ENCODE measurements at regions of chr6 and their contacts with region 1.

Region 1: DNA sequence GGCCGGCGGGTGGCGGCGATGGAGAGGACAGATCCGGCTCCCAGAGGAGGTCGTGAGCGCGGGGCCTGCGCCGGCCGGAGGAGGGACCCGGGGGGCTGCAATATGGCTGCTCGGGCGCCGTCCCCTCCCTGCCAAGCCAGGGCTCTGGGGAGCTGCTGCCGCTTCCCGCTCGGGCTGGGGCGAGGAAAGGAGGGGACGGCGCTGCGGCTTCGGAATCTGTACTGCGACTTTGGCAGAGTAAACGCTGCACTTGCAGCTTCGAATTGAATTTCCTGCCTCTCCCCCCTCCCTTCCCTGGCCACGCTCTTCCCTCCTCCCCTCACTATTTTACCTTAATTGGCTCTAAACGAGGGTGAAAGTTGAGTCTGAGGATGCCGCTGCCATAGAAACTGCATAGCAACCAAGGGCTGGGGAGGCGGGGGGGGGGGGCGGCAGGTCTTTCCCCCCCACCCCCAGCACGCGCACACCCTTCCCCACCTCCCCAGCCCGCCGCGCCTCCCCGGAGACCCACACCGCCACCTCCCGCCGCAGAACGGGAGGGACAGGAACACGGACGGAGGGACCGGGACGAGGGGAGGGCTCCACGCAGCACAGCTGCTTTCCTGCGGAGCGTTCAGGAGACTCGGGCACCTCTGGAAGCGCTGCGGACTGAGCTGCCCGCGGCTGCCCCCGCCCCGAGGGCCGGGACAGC is 93.9 kb downstream of the RNASET2 start:
- DNase-seq: peak; percentile 51
- H3K4me3 Mint-ChIP-seq: peak overlapping the region; percentile 79
- H3K27ac Mint-ChIP-seq: no peak overlapping the region
- H3K4me1 Mint-ChIP-seq: peaks cover 7% of the 10 kb centered on the region
- H3K27me3 Mint-ChIP-seq: no peaks in the 10 kb centered on the region

Region 2: DNA sequence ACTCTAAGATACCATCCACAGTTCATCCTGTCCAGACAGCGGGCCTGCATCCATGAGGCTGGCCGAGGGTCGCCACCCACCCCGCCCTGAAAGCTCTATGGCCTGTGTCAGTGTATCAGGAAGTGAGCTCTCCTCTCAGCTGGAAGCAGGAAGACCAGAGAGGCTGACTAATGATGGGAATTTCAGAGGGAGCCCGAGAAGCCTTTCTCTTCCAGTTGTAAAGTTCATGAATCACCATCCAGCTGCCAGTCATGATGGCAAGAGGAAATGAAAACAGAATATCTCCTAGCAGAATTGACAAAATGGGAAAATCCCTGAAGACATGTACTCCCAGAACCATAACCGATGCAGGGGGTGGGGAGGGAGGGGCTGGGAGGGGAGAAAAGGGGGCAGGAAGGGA is 125.8 kb before region 1 on chr6:
- CTCF ChIA-PET with region 1: no interaction called
- intact Hi-C with region 1: no loop called
- DNase-seq: no peak
- H3K4me3 Mint-ChIP-seq: no peak overlapping the region
- H3K27ac Mint-ChIP-seq: no peak overlapping the region
- H3K4me1 Mint-ChIP-seq: no peaks in the 10 kb centered on the region
- H3K27me3 Mint-ChIP-seq: no peaks in the 10 kb centered on the region

Region 3: GRCh38 chr6:166786704-166787293 is 75.6 kb before region 1 on chr6:
- CTCF ChIA-PET with region 1: no interaction called
- intact Hi-C with region 1: loop called (anchors 2 kb)
- DNase-seq: peak; percentile 24
- H3K4me3 Mint-ChIP-seq: no peak overlapping the region
- H3K27ac Mint-ChIP-seq: no peak overlapping the region
- H3K4me1 Mint-ChIP-seq: no peaks in the 10 kb centered on the region
- H3K27me3 Mint-ChIP-seq: no peaks in the 10 kb centered on the region

Region 4: GRCh38 chr6:166910601-166911000 is 48.2 kb after region 1 on chr6:
- CTCF ChIA-PET with region 1: interaction called, 3 read pairs
- intact Hi-C with region 1: loop called (anchors 1 kb)
- DNase-seq: peak; percentile 23
- H3K4me3 Mint-ChIP-seq: no peak overlapping the region
- H3K27ac Mint-ChIP-seq: no peak overlapping the region
- H3K4me1 Mint-ChIP-seq: peaks cover 27% of the 10 kb centered on the region
- H3K27me3 Mint-ChIP-seq: no peaks in the 10 kb centered on the region

Region 5: GRCh38 chr6:166940643-166941068 is 78.2 kb after region 1 on chr6:
- CTCF ChIA-PET with region 1: interaction called, 3 read pairs
- intact Hi-C with region 1: loop called (anchors 2 kb)
- DNase-seq: no peak
- H3K4me3 Mint-ChIP-seq: no peak overlapping the region
- H3K27ac Mint-ChIP-seq: peak overlapping the region; percentile 97
- H3K4me1 Mint-ChIP-seq: peaks cover 61% of the 10 kb centered on the region
- H3K27me3 Mint-ChIP-seq: no peaks in the 10 kb centered on the region

Region 6: DNA sequence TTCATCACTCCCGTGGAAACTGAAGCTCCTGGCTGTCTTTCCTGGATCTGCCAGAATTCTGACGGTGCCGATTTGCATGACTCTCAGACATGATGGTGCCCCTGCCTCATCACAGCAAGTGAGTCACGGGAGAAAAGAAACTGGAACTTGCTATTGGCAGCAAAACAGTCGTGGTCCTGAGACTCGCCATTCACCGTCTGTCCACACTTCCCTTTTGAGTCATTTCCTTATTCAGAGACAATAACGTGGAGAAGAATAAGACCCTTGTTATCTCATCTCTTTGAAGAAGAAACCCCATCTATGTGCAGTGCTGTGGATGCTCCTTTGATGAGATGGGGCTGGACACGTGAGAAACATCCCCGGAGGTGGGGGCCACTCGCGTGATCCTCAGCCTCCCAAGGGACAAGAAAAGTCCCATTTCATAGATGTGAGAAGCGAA is 291.1 kb after region 1 on chr6:
- CTCF ChIA-PET with region 1: no interaction called
- intact Hi-C with region 1: no loop called
- DNase-seq: no peak
- H3K4me3 Mint-ChIP-seq: no peak overlapping the region
- H3K27ac Mint-ChIP-seq: no peak overlapping the region
- H3K4me1 Mint-ChIP-seq: peaks cover 8% of the 10 kb centered on the region
- H3K27me3 Mint-ChIP-seq: no peaks in the 10 kb centered on the region

Region 7: GRCh38 chr6:167165858-167166471 is 303.5 kb after region 1 on chr6:
- CTCF ChIA-PET with region 1: no interaction called
- intact Hi-C with region 1: no loop called
- DNase-seq: no peak
- H3K4me3 Mint-ChIP-seq: no peak overlapping the region
- H3K27ac Mint-ChIP-seq: no peak overlapping the region
- H3K4me1 Mint-ChIP-seq: peaks cover 6% of the 10 kb centered on the region
- H3K27me3 Mint-ChIP-seq: peaks cover 4% of the 10 kb centered on the region

Measured in activated naive CD4-positive, alpha-beta T cell treated with anti-CD3 and anti-CD28 coated beads for 36 hours (primary cell).